WTC11 (cell line): ENCODE measurements at regions of chr2 and their contacts with region 1.

Region 1: DNA sequence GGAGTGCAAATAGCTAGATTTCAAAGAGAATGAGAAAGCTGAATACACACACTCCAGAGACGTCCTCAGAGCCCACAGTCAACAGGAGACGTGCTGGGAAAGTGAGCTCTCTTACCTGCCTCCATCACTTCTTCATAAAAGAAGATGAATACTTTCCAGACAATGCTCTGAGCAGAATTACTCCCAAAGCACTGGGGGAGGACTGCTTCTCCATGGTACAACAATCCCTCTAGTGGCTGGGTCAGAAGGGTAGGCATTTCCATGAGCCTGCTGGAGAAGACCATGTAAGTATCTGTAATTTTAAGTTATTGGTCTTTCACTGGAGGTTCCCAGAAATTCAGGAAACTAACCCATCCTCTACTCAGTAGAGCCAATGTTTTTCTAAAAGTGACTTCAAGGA is 190.3 kb downstream of the RBM43 start:
- DNase-seq: peak; percentile 20
- ATAC-seq: peak; percentile 93
- H3K4me3 Mint-ChIP-seq: no peak overlapping the region
- H3K27ac Mint-ChIP-seq: peak overlapping the region; percentile 77; the same call in 1 of the 2 replicates
- H3K4me1 Mint-ChIP-seq: peaks cover 30% of the 10 kb centered on the region
- H3K27me3 Mint-ChIP-seq: no peaks in the 10 kb centered on the region
- CTCF ChIP-seq: no peak

Region 2: GRCh38 chr2:151161821-151162551 is 90.6 kb after region 1 on chr2:
- CTCF ChIA-PET with region 1: interaction called, 10 read pairs
- POLR2A ChIA-PET with region 1: no interaction called
- DNase-seq: no peak
- ATAC-seq: peak; percentile 56
- H3K4me3 Mint-ChIP-seq: no peak overlapping the region
- H3K27ac Mint-ChIP-seq: no peak overlapping the region
- H3K4me1 Mint-ChIP-seq: peaks cover 47% of the 10 kb centered on the region
- H3K27me3 Mint-ChIP-seq: peaks cover under 1% of the 10 kb centered on the region; the same call in 1 of the 2 replicates
- CTCF ChIP-seq: no peak

Region 3: DNA sequence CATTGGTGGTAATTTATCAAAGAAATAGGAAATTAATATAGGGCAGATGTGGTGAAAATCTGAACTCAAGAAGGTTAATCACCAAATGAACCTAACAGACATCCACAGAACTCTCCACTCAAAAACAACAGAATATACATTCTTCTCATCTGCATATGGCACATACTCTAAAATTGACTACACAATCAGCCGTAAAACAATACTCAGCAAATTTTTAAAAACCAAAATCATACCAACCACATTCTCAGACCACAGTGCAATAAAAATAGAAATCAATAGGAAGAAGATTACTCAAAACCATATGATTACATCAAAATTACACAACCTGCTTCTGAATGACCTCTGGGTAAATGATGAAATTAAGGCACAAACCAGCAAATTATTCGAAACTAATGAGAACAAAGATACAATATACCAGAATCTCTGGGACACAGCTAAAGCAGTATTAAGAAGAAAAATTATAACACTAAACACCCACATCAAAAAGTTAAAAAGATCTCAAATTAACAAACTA is 159.3 kb after region 1 on chr2:
- CTCF ChIA-PET with region 1: no interaction called
- POLR2A ChIA-PET with region 1: no interaction called
- DNase-seq: no peak
- ATAC-seq: no peak
- H3K4me3 Mint-ChIP-seq: no peak overlapping the region
- H3K27ac Mint-ChIP-seq: no peak overlapping the region
- H3K4me1 Mint-ChIP-seq: no peaks in the 10 kb centered on the region
- H3K27me3 Mint-ChIP-seq: no peaks in the 10 kb centered on the region
- CTCF ChIP-seq: no peak